Gastrocnemius medialis (tissue), 4 donors: ENCODE measurements at regions of chr5 and their contacts with region 1.

Region 1: DNA sequence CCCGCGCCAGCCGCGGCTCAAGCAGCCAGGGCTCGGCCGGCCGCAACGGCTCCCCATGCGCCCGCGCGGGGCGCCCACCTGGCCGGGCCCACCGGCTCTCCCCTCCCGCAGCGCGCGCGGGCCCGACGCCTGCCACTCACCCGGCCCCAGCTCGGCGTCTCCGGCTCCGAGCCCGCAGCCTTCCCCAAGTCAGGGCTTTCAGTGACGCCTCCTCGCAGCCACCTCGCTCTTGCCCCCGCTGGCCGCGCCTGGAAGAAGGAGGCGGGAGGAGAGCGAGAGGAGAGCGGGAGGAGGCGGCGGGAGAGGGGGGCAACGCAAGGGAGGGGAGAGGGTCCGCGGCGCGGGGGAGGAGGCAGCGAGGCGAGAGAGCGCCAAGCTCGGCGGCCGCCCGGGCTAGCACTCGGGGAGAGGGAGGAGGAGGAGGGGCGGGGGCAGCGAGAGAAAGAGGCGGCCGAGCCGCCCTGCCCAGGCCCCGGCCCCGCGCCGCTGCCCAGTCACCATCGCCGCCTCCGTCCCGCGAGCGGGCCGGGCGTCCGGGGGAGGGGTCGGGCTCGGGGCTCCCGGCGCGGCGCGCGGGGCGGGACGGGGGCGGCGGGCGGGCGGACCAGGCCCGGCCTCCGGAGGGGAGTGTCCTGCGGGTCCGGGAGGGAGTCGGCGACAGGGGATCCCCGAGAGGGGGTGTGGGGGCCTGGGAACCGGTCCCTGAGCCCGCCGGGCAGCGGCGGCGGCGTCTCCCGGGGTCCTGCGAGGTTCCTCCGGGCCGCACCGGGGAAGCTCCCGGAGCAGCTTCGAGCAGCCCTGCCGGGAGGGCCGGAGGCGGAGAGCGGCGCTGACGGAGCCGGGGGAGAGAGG is at the start of gene LHFPL2:
- DNase-seq: peak; percentile 38 to 52
- ATAC-seq: peak; percentile 72 to 79
- H3K4me3 ChIP-seq: peak within 1 kb of the TSS; percentile 72 to 95 (median 78)
- H3K27ac ChIP-seq: peak within 1 kb of the TSS; percentile 82 to 91 (median 86)
- H3K4me1 ChIP-seq: peaks cover 12% of the 10 kb centered on the region in 2 donors
- H3K27me3 ChIP-seq: no peaks in the 10 kb centered on the region
- CTCF ChIP-seq: peak in 1 of 5 experiments; percentile 5
- POLR2A ChIP-seq: peak; percentile 43 to 50
- total RNA-seq, gene LHFPL2: 3.4 to 4.7 (median 3.5) TPM

Region 2: DNA sequence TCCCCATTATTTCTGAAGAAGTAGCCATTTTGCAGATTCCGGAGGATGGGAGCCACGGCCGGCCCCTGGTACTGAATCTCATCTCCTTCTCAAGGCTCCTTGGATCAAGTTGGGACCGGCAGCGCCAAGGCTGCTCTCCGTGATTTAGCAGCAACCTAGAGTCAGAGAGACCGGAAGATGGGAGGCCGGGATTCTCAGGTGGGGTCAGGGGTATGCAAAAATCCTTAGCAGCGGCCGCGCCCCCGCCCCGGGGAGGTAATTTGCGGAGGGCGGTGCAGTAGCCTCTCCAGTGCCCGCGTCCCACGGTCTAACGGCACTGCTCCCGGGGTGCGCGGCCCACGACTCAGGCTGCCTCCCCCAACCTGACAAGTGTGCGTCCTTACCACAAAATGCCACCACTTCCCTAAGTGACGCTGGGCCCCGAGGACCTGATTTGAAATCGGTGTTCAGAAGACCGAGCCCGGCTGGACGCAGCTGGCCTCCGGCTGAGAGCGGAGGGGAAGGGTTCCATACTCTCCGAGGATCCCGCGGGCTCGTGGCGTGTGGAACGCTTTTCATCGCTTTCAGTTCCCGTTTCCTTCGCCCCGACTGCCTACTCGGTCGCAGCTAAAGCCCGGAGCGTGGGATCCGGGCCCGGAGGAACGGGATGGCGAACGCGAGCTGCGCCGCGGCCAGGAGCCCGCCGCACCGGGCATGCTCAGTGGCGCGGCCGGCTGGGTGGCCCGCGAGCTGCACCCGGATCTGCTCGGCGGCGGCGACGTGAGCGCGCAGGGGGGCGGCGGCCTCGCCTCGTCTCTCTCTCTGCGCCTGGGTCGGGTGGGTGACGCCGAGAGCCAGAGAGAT is 288.5 kb before region 1 on chr5 and contains the start of gene SCAMP1:
- in situ Hi-C with region 1: no loop called
- intact Hi-C with region 1: loop called (anchors 5 kb)
- DNase-seq: peak; percentile 83 to 87
- ATAC-seq: peak; percentile 88 to 89
- H3K4me3 ChIP-seq: peak within 1 kb of the TSS; percentile 81 to 100 (median 99)
- H3K27ac ChIP-seq: peak within 1 kb of the TSS; percentile 89 to 95 (median 92)
- H3K4me1 ChIP-seq: peaks cover 24 to 26% of the 10 kb centered on the region in 2 donors
- H3K27me3 ChIP-seq: no peaks in the 10 kb centered on the region
- CTCF ChIP-seq: peak in 4 of 5 experiments; percentile 47 to 69 (median 64)
- POLR2A ChIP-seq: peak; percentile 76 to 79
- total RNA-seq, gene SCAMP1: 17.5 to 35.2 (median 22.0) TPM

Region 3: DNA sequence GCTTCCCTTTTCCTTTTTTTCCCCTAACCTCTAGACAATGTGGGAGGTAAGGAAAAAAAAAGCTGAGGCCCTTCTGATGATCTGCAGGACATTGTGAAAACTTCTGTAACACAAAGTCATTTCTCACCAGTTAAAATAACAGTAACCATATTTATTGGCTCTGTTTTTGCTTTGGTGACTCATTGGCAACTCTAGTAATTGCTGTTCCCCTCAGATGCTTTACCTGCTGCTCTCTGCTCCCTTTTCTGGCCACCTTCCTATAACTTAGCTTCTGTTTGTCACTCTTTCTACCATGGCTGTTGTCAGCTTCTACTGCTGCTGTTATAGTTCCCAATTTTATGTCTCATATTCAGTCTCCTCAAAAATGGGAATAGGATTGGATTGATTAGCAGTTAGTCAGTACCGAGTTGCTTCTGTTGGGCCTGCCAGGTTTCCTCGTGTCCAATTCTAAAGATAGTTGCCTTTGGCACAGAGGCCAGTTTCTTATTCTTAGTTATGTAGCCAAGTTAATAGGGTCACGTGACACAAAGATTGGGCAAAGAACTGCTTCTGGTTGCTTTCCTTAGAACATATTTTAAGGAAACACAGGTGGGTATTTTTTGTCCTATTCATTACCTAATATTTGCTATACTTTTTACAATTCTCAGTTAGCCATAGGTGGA is 271.4 kb before region 1 on chr5:
- in situ Hi-C with region 1: no loop called
- intact Hi-C with region 1: loop called (anchors 5 kb)
- DNase-seq: peak; percentile 20 to 27
- ATAC-seq: peak; percentile 84 to 89
- H3K4me3 ChIP-seq: peak overlapping the region in 2 of 4 donors; percentile 1 to 18
- H3K27ac ChIP-seq: peak overlapping the region; percentile 55 to 75 (median 62)
- H3K4me1 ChIP-seq: peaks cover 26 to 43% of the 10 kb centered on the region in 2 donors
- H3K27me3 ChIP-seq: no peaks in the 10 kb centered on the region
- CTCF ChIP-seq: no peak
- POLR2A ChIP-seq: no peak

Region 4: DNA sequence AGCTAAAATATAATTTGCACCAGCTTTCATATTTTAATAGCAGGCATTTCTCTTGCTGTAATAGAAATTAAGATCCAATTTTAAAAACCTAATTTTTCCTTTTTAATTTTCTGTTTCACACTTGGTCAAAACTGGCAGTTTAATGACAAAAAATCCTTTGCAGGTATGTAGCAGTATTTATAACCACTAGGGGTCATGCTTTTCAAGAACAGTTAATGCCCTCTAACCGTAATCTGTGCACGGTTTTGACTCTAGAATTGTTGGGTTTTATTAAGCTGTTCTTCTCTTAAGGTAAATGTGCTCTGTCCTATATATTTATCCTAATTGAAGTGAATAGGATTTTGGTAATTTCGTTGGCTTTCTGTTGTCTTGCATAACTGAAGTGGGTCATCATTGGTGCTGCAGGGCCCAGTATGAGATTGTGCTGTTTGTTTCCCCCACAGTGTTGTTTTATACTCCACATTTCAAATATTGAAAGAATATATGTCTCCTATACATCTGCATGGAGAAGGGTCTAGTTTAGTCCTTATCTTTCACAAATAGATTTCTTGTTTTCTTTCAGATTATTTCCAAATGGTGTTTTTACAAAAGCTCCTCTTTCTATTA is 180.7 kb before region 1 on chr5:
- in situ Hi-C with region 1: loop called in 1 of 4 experiments (anchors 10 kb)
- intact Hi-C with region 1: loop called (anchors 5 kb)
- DNase-seq: no peak
- ATAC-seq: peak in 1 of 2 donors; percentile 66
- H3K4me3 ChIP-seq: no peak overlapping the region
- H3K27ac ChIP-seq: no peak overlapping the region
- H3K4me1 ChIP-seq: no peaks in the 10 kb centered on the region
- H3K27me3 ChIP-seq: no peaks in the 10 kb centered on the region
- CTCF ChIP-seq: peak; percentile 55 to 78 (median 67)
- POLR2A ChIP-seq: no peak

Region 5: GRCh38 chr5:78537821-78538220 is 110.8 kb before region 1 on chr5:
- in situ Hi-C with region 1: loop called in 1 of 4 experiments (anchors 25 kb)
- intact Hi-C with region 1: loop called (anchors 10 kb)
- DNase-seq: no peak
- ATAC-seq: peak; percentile 53 to 78
- H3K4me3 ChIP-seq: no peak overlapping the region
- H3K27ac ChIP-seq: no peak overlapping the region
- H3K4me1 ChIP-seq: no peaks in the 10 kb centered on the region
- H3K27me3 ChIP-seq: no peaks in the 10 kb centered on the region
- CTCF ChIP-seq: peak in 4 of 5 experiments; percentile 28 to 62 (median 45)
- POLR2A ChIP-seq: no peak

Region 6: GRCh38 chr5:78547731-78548615 is 100.6 kb before region 1 on chr5:
- in situ Hi-C with region 1: loop called in 2 of 4 experiments (anchors 10 to 25 kb)
- intact Hi-C with region 1: loop called (anchors 10 kb)
- DNase-seq: peak; percentile 80 to 82
- ATAC-seq: peak; percentile 84 to 87
- H3K4me3 ChIP-seq: no peak overlapping the region
- H3K27ac ChIP-seq: peak overlapping the region; percentile 75 to 80 (median 77)
- H3K4me1 ChIP-seq: peaks cover 20 to 25% of the 10 kb centered on the region in 2 donors
- H3K27me3 ChIP-seq: no peaks in the 10 kb centered on the region
- CTCF ChIP-seq: no peak
- POLR2A ChIP-seq: no peak

Region 7: GRCh38 chr5:78569448-78569847 is 79.1 kb before region 1 on chr5:
- in situ Hi-C with region 1: no loop called
- intact Hi-C with region 1: loop called (anchors 5 kb)
- DNase-seq: peak; percentile 81 to 87
- ATAC-seq: peak; percentile 90 to 97
- H3K4me3 ChIP-seq: no peak overlapping the region
- H3K27ac ChIP-seq: peak overlapping the region in 2 of 4 donors; percentile 12 to 66
- H3K4me1 ChIP-seq: peaks cover 42 to 50% of the 10 kb centered on the region in 2 donors
- H3K27me3 ChIP-seq: no peaks in the 10 kb centered on the region
- CTCF ChIP-seq: no peak
- POLR2A ChIP-seq: no peak